Spleen (tissue), 13 donors: ENCODE measurements at regions of chr1 and their contacts with region 1.

Region 1: GRCh38 chr1:70504176-70504820 is 93.2 kb downstream of the CTH start:
- DNase-seq: no peak
- H3K4me3 ChIP-seq: no peak overlapping the region
- H3K27ac ChIP-seq: no peak overlapping the region
- H3K4me1 ChIP-seq: no peaks in the 10 kb centered on the region
- H3K27me3 ChIP-seq: peaks cover 0 to 3% (median 0%) of the 10 kb centered on the region in 7 donors
- CTCF ChIP-seq: no peak
- POLR2A ChIP-seq: no peak

Region 2: GRCh38 chr1:70142075-70142474 is 362.2 kb before region 1 on chr1:
- intact Hi-C with region 1: loop called (anchors 5 kb)
- DNase-seq: no peak
- H3K4me3 ChIP-seq: no peak overlapping the region
- H3K27ac ChIP-seq: no peak overlapping the region
- H3K4me1 ChIP-seq: peaks cover 0 to 5% (median 0%) of the 10 kb centered on the region in 6 donors
- H3K27me3 ChIP-seq: no peaks in the 10 kb centered on the region
- CTCF ChIP-seq: no peak
- POLR2A ChIP-seq: no peak

Region 3: DNA sequence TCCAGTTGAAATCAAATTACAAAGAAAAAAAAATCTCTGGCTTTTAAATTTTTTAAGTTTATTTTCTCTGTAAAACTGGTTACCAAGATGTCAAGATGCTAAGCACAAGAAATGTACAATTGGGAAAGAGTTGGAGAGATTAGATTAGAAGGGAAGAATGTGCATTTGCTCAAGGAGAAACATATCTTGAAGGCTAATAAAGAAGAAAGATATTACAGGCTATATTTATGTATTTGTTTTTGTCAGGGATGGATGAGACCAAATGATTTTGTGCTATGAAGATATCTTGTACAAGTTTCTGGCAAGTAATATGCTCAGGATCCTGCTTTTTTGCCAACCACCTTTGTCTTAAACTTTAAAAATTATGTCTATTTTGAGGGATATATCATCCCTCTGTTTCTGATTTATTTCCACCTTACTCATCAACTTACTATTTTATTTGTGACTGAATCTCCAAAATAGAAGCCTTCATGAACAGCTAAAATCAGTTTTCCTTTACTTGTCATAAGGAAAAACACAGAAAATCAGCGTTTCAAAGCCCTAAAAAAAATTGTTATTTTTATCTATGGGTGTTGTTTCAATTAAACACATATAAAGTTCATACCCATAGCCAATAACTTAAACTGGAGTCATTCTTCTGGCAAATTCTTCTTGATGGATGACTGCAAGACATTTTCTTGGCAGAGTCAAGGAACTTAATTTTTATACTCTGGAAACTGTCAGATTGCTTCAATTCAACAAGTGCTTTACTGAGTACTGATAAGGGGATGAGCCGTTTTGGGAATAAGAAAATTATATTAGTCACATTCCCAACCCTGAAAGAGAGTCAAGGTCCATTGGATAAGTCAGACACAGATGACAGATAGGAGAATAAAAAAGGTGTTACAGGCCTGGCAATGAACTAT is 48.6 kb after region 1 on chr1:
- intact Hi-C with region 1: no loop called
- DNase-seq: no peak
- H3K4me3 ChIP-seq: no peak overlapping the region
- H3K27ac ChIP-seq: no peak overlapping the region
- H3K4me1 ChIP-seq: no peaks in the 10 kb centered on the region
- H3K27me3 ChIP-seq: peaks cover 0 to 8% (median 0%) of the 10 kb centered on the region in 7 donors
- CTCF ChIP-seq: no peak
- POLR2A ChIP-seq: no peak

Region 4: DNA sequence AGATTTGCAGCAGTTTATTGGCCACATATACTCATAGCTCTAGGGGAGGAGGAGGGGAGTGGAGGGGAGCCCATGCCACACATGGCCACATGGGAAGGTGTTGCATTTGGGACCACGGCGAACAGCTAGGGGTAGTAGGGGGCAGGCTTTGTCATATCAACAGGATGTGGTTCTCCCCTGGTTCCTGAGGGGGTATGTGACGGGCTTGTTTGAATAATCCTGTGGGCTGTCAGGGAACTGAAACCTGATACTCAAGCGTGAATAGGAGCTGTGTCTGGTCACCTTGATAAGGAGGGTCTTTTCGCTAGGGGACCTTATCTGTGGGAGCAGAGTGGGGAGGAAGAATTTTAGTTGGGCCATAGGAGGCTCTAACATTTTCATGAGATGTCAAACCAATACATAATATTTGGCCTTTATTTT is 171.4 kb after region 1 on chr1:
- intact Hi-C with region 1: no loop called
- DNase-seq: no peak
- H3K4me3 ChIP-seq: no peak overlapping the region
- H3K27ac ChIP-seq: no peak overlapping the region
- H3K4me1 ChIP-seq: no peaks in the 10 kb centered on the region
- H3K27me3 ChIP-seq: no peaks in the 10 kb centered on the region
- CTCF ChIP-seq: no peak
- POLR2A ChIP-seq: no peak